ENCODE measurements at regions of chr6 and their contacts with region 1.

Region 1: DNA sequence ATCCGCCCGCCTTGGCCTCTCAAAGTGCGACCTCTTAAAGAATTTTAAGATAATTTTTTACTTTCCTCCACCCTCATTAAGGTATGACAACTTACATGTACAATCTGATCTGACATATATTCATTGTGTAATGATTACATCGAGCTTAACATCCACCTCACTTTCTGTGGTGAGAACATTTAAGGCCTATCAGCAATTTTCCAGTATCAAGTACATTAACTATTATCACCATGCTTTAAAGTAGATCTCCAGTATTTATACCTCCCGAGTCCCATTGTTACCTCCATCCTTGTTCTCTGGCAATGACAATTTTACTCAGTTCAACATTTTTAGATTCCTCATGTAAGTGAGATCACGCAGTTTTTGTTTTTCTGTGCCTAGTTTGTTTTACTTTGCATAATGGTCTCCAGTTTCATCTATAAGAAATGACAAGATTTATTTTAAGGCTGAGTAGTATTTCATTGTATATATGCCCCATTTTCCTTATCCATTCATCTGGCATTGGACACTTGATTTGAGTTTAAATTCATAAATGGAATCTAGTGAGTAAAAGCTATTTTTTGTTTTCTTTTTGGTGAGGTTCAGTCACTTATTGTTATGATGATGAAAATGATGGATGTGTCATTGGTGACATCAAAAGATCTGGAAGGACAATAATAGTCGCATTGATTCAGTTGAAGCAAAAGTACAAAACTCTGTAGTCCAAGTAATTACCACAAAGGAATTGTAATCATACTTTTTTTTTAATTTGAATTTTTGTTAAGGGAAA is 87.0 kb downstream of the OR2B2 start:
- DNase-seq: peak in 1 of 2 donors; percentile 40
- ATAC-seq: no peak
- H3K4me3 ChIP-seq: peak overlapping the region; percentile 51
- H3K4me3 Mint-ChIP-seq: peak overlapping the region; percentile 94
- H3K27ac ChIP-seq: peak overlapping the region; percentile 82
- H3K27ac Mint-ChIP-seq: peak overlapping the region; percentile 95 to 99
- H3K4me1 ChIP-seq: peaks cover 10% of the 10 kb centered on the region
- H3K4me1 Mint-ChIP-seq: peaks cover 32 to 34% of the 10 kb centered on the region in 2 donors
- H3K27me3 ChIP-seq: no peaks in the 10 kb centered on the region
- H3K27me3 Mint-ChIP-seq: no peaks in the 10 kb centered on the region
- CTCF ChIP-seq: no peak

Region 2: DNA sequence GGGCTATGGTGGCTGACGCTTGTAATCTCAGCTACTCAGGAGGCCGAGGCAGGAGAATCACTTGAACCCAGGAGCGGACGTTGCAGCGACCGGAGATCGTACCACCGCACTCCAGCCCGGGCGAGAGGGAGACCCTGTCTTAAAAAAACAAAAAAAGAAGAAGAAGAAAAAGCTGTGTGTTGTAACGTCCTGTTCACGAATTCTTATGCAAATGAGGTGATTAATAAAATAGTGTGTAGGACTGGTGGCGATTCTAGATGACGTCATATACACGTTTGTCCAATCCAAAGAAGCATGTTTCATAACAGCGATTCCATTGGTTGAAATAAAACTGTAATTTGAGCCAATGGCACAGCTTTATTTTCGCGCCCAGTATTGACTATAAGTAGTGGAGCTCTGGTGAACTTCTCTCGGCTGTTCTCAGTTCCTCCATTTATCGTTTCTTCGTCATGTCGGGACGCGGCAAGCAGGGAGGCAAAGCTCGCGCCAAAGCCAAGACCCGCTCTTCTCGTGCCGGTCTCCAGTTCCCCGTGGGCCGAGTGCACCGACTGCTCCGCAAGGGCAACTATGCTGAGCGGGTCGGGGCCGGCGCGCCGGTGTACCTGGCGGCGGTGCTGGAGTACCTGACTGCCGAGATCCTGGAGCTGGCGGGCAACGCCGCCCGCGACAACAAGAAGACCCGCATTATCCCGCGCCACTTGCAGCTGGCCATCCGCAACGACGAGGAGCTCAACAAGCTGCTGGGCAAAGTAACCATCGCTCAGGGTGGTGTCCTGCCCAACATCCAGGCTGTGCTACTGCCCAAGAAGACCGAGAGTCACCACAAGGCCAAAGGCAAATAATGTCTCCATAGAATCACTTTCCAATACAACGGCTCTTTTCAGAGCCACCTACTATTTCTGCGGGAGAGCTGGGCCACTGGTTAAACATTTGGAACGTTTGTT is 40.0 kb after region 1 on chr6:
- intact Hi-C with region 1: loop called (anchors 1 kb)
- DNase-seq: peak; percentile 63 to 96
- ATAC-seq: peak; percentile 76 to 89 (median 81)
- H3K4me3 ChIP-seq: peak overlapping the region; percentile 69
- H3K4me3 Mint-ChIP-seq: peak overlapping the region; percentile 90
- H3K27ac ChIP-seq: peak overlapping the region; percentile 82
- H3K27ac Mint-ChIP-seq: peak overlapping the region; percentile 92 to 94
- H3K4me1 ChIP-seq: peaks cover 35% of the 10 kb centered on the region
- H3K4me1 Mint-ChIP-seq: peaks cover 44% of the 10 kb centered on the region in 2 donors
- H3K27me3 ChIP-seq: no peaks in the 10 kb centered on the region
- H3K27me3 Mint-ChIP-seq: no peaks in the 10 kb centered on the region
- CTCF ChIP-seq: no peak